Activated B cell treated with CpG ODN at 0.5 μM for 24 hours (primary cell): ENCODE measurements at regions of chr3 and their contacts with region 1.

Region 1: DNA sequence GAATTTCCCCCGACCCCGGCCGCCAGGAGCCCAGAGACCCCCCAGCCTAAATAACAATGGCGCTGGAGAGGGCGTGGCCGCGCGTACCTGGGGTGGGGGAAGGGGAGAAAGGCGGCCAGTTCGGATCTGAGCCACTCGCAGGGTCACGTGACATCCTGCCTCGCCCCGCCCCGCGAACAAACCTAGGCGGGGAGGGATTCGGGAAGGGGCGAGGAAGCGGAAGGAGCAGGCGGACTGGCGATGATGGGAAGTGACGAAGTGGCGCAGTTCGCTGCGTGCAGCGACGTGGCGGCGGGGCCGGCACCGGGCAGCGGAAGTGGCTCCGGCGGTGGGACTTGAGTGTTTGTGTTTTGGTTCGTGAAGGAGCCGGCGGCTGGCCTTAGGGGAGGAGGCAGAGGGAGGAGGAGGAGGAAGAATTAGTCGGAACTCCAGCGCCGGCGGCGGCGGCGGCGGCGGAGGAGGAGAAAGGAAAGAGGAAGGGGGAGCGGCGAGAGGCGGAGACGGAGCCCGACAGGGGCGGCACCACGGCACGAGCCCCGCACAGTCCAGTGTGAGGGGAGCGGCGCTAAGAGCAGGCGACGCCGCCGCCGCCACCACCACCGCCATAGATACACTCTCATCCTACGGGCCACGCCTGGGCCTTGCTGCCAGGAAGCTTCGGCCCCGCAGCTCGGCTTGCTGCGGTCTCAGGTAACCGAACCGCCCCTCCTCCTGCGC is at the start of gene RAB5A:
- DNase-seq: peak; percentile 95
- ATAC-seq: peak; percentile 87
- H3K4me3 Mint-ChIP-seq: peak within 1 kb of the TSS; percentile 94
- H3K27ac Mint-ChIP-seq: peak within 1 kb of the TSS; percentile 96
- H3K4me1 Mint-ChIP-seq: peaks cover 47% of the 10 kb centered on the region
- H3K27me3 Mint-ChIP-seq: no peaks in the 10 kb centered on the region
- CTCF ChIP-seq: no peak
- total RNA-seq, gene RAB5A: 43.2 and 45.2 TPM in 2 replicates

Region 2: DNA sequence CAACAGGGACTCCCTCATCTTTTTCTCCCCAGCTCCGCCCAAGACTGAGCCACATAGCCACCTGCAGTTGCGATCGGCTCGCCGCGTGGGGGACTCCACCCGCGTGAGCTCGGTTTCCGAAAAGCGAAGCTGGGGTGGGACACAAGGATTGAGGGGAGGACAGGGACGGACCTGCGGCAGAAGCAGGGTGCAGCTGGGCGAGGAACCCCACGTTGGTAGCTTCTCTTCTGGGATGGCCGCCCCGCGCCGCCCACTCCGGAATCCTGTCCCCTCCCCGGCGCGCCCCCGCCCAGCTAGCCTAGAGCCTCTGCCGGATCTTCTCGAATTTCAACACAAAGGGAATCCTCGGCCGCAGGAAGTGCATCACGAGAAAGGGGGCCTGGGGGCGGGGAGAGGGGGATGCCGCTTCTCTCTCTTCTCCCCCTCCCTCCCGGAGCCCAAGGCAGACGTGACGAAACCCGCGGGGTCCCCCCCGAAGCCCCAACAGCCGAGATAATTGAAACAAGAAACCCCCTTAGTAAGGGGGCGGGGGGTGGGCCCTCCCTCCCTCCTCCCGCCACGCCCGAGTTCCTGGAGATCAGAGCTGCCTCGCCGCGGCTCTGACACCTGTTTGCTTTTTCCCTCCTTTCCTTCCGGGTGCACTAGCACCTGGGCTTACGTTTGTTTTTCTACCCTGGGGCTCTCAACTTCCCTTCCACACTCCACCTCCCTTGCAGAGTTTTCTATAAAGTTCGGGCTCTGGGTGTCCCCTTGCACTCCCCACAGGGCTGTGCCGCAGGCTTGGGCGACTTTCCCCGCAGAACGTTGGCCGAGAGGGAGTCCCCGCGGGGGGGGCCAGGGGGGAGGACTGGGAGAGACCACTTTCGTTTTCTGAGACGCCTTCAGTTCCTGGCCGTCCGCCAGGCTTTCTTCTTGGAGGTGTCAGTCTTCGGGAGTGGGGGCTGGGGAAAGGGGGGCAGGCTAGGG is 800.0 kb before region 1 on chr3:
- CTCF ChIA-PET with region 1: no interaction called
- POLR2A ChIA-PET with region 1: no interaction called
- intact Hi-C with region 1: loop called (anchors 1 kb)
- DNase-seq: peak; percentile 64
- ATAC-seq: peak; percentile 73
- H3K4me3 Mint-ChIP-seq: peak overlapping the region; percentile 95
- H3K27ac Mint-ChIP-seq: peak overlapping the region; percentile 85
- H3K4me1 Mint-ChIP-seq: peaks cover 14% of the 10 kb centered on the region
- H3K27me3 Mint-ChIP-seq: peaks cover 9% of the 10 kb centered on the region
- CTCF ChIP-seq: no peak

Region 3: DNA sequence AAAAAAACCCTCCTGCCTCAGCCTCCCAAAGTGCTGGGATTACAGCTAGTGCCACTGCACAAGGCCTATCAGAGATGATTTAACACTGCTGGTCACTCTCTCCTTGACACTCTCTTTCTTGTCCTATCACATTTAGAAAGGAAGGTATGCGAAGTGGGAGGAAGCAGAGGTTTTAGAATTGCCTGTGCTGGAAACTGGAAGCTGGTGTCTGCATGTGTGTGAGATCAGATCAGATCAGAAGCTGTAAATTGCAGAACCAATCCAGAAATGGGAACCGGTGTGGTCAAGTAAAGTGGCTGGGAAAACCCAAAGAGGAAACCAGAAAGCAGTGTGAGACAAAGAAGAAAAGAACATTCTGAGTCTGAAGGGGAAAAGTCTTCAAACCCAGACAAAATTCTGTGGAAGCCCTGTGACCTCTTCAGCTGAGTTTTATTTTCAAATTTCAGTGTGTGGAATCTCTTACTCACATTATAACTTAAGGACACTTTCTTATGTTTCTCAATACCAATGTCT is 15.8 kb before region 1 on chr3:
- CTCF ChIA-PET with region 1: no interaction called
- POLR2A ChIA-PET with region 1: no interaction called
- intact Hi-C with region 1: loop called (anchors 1 kb)
- DNase-seq: no peak
- ATAC-seq: peak; percentile 65
- H3K4me3 Mint-ChIP-seq: peak overlapping the region; percentile 9
- H3K27ac Mint-ChIP-seq: peak overlapping the region; percentile 50
- H3K4me1 Mint-ChIP-seq: peaks cover 17% of the 10 kb centered on the region
- H3K27me3 Mint-ChIP-seq: peaks cover 5% of the 10 kb centered on the region
- CTCF ChIP-seq: no peak

Region 4: GRCh38 chr3:20054549-20054987 is 107.6 kb after region 1 on chr3:
- CTCF ChIA-PET with region 1: no interaction called
- POLR2A ChIA-PET with region 1: no interaction called
- intact Hi-C with region 1: loop called (anchors 1 kb)
- DNase-seq: peak; percentile 22
- ATAC-seq: peak; percentile 92
- H3K4me3 Mint-ChIP-seq: no peak overlapping the region
- H3K27ac Mint-ChIP-seq: no peak overlapping the region
- H3K4me1 Mint-ChIP-seq: peaks cover 33% of the 10 kb centered on the region
- H3K27me3 Mint-ChIP-seq: no peaks in the 10 kb centered on the region
- CTCF ChIP-seq: no peak